Posterior cingulate gyrus (tissue), 11 donors: ENCODE measurements at regions of chr21 and their contacts with region 1.

Region 1: GRCh38 chr21:40120940-40121575 is 253.8 kb downstream of the PCP4 start:
- DNase-seq: no peak

Region 2: DNA sequence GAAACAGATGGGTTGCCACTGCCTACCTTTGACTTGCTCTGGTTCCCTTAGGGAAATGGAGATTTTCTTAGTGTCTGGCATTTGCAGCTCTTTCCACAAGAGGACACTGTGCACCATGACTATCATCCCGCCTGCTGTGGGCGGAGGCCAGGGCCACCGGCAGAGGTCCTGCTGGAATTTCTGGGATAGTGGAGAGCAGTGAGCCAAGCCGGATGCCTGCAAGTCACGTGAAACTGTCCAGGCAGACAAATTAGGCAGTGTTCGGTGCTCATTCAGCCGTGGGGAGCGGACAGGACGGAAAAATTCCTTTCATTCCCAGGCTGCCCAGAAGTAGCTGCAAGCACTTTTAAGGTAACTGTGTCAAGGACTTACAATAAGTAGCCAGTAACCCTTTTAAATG is 332.7 kb before region 1 on chr21:
- intact Hi-C with region 1: loop called (anchors 1 kb)
- DNase-seq: peak; percentile 46 to 96 (median 69)

Region 3: GRCh38 chr21:39867198-39867650 is 253.8 kb before region 1 on chr21 and contains the start of gene PCP4:
- intact Hi-C with region 1: loop called (anchors 1 kb)
- DNase-seq: peak; percentile 50 to 96 (median 76)